Right ventricle myocardium inferior (tissue), 1 donor: ENCODE measurements at regions of chr1 and their contacts with region 1.

Region 1: DNA sequence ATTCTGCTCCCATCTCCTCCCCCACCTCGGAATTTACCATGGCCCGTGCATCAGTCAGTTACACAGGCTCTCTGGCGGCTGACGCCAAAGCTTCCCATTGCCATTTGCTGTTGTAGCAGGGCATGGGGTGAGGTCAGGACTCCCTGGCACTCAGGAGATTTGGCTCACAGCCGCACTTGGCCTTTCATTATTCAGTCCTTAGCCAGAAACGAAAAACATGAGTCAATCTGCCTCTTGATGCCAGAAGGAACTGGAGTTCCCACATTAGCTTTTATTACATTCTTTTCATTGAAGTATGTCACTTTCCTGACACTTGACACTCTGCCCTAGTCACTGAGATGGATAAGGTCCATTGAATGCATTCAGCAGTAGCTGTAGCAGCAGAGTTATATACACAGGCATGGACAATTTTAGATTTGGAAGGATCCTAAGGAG is 260.6 kb downstream of the CACNA1E start:
- DNase-seq: no peak
- ATAC-seq: peak; percentile 78

Region 2: GRCh38 chr1:181936768-181937581 is 193.1 kb after region 1 on chr1:
- intact Hi-C with region 1: loop called (anchors 10 kb)
- DNase-seq: peak; percentile 27
- ATAC-seq: no peak